ENCODE measurements at regions of chr5 and their contacts with region 1.

Region 1: DNA sequence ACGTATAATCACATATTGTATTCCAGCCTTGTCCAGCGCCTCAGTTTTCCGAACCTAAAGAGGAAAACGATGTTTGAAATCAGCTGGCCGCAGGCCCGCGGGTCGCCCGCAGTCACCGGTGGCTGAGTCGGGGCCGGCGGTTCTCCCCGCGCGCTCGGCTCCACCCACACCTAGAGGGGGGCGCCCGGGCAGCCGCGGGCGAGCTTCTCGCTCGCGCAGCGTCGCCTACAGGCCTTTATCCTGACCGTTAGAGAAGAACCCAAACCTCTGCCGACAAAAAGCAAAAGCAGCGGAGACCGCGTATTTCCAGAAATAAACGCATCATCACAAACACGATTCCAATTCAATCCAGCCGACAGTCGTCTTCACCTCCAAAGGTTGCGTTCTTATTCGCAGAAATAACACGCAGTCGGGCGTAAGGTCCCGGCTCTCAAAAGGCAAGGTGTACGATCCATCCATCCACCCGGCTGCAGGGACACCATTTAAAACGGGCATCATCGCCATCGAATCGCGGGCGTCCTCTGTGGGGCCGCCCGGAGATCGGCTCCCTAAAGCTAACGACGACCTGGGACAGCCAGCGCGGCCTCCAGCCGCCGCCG is 680 bp upstream of the NIPBL start:
- DNase-seq: peak in 1 of 2 donors; percentile 88
- H3K4me3 ChIP-seq: peak overlapping the region; percentile 87 to 96
- H3K27ac ChIP-seq: peak overlapping the region; percentile 99 to 100
- H3K4me1 ChIP-seq: peaks cover 4 to 29% of the 10 kb centered on the region in 2 donors
- H3K27me3 ChIP-seq: no peaks in the 10 kb centered on the region
- CTCF ChIP-seq: peak; percentile 32 to 59 (median 48)

Region 2: GRCh38 chr5:34929150-34929719 is 1946.7 kb before region 1 on chr5 and contains the start of gene DNAJC21:
- intact Hi-C with region 1: loop called (anchors 5 kb)
- DNase-seq: peak; percentile 92 to 99
- H3K4me3 ChIP-seq: peak within 1 kb of the TSS; percentile 64 to 72
- H3K27ac ChIP-seq: peak within 1 kb of the TSS; percentile 87 to 98
- H3K4me1 ChIP-seq: peaks cover 0 to 15% of the 10 kb centered on the region in 2 donors
- H3K27me3 ChIP-seq: no peaks in the 10 kb centered on the region
- CTCF ChIP-seq: no peak
- total RNA-seq, gene DNAJC21: 30.5 TPM

Region 3: DNA sequence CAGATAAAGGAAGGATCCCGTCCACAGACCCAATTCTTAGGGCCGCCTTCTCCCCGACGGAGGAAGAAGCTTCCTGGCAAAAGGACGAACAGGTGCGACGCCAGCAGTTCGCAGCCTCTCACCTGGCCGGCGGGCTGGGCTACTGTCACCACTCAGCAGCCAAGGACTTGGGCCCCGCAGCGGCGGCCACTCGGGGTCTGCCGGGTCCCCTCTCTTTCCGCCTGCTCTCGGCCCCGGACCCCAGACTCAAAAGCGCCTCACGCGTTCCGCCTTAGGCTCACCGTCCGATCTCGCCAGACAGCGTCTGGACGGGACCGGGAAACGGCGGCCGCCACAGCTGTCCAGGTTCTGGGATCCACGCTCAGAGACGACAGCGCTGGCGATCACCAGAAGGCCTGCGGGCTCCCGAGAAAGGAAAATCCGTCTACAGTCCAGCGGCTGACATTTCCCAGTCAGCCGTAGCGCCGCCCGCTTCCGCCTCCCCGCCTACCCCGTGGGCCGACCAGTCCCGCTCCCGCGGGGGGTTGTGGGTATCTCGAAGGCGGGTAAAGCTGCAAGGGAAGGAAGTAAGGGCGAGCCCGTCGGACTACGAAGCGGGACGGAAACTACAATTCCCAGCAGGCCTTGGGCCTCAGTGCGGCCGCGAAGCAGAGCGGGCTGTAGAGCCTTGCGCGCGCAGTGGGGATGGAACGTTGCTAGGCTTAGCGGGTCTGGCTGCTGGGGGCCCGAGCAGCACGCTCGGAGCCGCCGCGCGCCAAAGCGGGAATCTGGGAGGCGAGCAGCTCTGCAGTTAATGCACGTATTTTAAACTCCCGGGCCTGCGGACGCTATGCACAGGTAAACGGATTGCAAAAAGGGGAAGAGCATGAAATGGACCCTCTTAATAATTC is 724.2 kb before region 1 on chr5 and contains the starts of genes LMBRD2 and SKP2:
- intact Hi-C with region 1: loop called (anchors 2 kb)
- DNase-seq: peak; percentile 93 to 99
- H3K4me3 ChIP-seq: peak within 1 kb of the TSS; percentile 83 to 92
- H3K27ac ChIP-seq: peak within 1 kb of the TSS; percentile 83 to 84
- H3K4me1 ChIP-seq: peaks cover 0 to 4% of the 10 kb centered on the region in 2 donors
- H3K27me3 ChIP-seq: no peaks in the 10 kb centered on the region
- CTCF ChIP-seq: peak in 1 of 3 experiments; percentile 4
- total RNA-seq, gene LMBRD2: 24.5 TPM
- total RNA-seq, gene SKP2: 14.4 TPM

Region 4: DNA sequence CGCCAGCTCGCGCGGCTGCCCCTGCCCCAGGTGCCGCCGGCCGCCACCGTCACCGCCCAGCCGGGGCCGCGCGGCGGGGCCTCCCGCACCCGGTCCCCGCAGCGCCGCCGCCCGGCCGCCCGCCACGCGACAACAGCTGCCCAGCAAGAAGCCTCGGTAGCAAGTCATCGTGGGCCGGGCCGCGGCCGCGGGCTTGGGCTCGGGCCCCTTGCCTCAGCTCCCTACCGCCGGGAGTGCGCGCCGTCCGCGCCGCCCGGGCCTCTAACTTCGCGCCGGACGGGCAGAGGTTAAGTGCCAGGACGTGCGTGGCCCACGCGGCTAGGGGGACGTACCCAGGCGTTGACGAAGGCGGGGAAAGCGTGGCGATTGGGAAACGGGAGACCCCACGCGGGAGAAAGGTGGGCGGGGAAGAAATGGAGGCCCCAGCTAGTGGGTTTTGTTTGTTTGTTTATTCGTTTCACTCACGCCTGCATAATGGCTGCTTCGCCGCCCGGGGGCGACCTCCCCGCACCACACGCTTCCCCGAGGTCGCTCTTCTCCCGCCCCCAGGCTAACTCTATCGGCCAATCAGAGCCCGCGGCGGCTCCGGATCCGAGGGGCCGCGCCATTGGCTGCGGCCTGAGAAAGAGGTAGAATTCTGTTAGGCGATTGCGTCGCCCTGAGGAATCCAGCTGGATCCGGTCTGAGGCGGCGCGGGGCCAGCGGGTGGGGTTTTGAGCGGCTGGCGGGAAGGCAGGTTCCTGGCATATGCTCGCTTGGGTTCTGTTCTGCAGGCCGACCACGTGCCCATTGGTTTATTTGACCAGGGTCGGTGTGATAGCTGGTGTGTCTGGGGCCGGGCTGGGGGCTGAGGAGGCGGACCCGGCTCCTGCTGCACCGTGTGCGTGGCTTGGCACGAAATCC is 634.0 kb before region 1 on chr5 and contains the start of gene NADK2:
- intact Hi-C with region 1: loop called (anchors 5 kb)
- DNase-seq: peak; percentile 90 to 98
- H3K4me3 ChIP-seq: peak within 1 kb of the TSS; percentile 65 to 88
- H3K27ac ChIP-seq: peak within 1 kb of the TSS; percentile 93 to 95
- H3K4me1 ChIP-seq: peaks cover 0 to 8% of the 10 kb centered on the region in 2 donors
- H3K27me3 ChIP-seq: no peaks in the 10 kb centered on the region
- CTCF ChIP-seq: peak; percentile 60 to 84 (median 74)
- total RNA-seq, gene NADK2: 18.4 TPM

Region 5: GRCh38 chr5:36944607-36945225 is 68.8 kb after region 1 on chr5:
- intact Hi-C with region 1: loop called (anchors 5 kb)
- DNase-seq: no peak
- H3K4me3 ChIP-seq: no peak overlapping the region
- H3K27ac ChIP-seq: no peak overlapping the region
- H3K4me1 ChIP-seq: peaks cover 0 to 10% of the 10 kb centered on the region in 2 donors
- H3K27me3 ChIP-seq: no peaks in the 10 kb centered on the region
- CTCF ChIP-seq: peak in 2 of 3 experiments; percentile 48 to 58

Region 6: GRCh38 chr5:37370864-37371726 is 495.2 kb after region 1 on chr5 and contains the start of gene NUP155:
- intact Hi-C with region 1: loop called (anchors 2 kb)
- DNase-seq: peak; percentile 67 to 95
- H3K4me3 ChIP-seq: peak within 1 kb of the TSS; percentile 78 to 84
- H3K27ac ChIP-seq: peak within 1 kb of the TSS; percentile 64 to 89
- H3K4me1 ChIP-seq: peaks cover 0 to 12% of the 10 kb centered on the region in 2 donors
- H3K27me3 ChIP-seq: no peaks in the 10 kb centered on the region
- CTCF ChIP-seq: no peak
- total RNA-seq, gene NUP155: 62.3 TPM